Activated naive CD4-positive, alpha-beta T cell treated with anti-CD3 and anti-CD28 coated beads, Interleukin-2, amount 10 ng/mL, durations not matched to agents 7 days and 5 days (primary cell): ENCODE measurements at regions of chr4 and their contacts with region 1.

Region 1: DNA sequence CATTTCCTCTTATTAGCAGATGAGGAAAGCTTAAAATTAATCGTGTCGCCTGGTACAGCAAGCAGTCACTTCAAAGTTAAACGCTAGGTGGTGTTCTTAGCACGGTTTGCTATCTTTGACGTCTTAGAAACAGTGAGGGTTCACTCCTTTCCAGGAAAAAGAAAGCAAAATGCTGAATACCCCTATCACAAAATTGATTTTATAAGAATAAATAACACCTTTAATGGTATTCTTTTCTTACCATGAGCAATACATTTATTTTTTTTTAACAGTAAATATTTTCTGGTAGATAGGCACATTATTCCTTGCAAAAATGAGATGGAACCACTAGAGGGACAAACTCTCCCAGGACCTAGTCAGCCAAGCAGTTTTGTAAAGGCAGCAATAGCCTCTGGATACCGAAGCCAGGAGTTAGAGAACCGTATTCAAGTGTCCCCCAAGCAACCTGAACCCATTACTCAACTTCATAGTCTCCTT is 153.9 kb downstream of the KDR start:
- DNase-seq: peak; percentile 26
- H3K4me3 Mint-ChIP-seq: no peak overlapping the region
- H3K27ac Mint-ChIP-seq: no peak overlapping the region
- H3K4me1 Mint-ChIP-seq: no peaks in the 10 kb centered on the region
- H3K27me3 Mint-ChIP-seq: no peaks in the 10 kb centered on the region

Region 2: DNA sequence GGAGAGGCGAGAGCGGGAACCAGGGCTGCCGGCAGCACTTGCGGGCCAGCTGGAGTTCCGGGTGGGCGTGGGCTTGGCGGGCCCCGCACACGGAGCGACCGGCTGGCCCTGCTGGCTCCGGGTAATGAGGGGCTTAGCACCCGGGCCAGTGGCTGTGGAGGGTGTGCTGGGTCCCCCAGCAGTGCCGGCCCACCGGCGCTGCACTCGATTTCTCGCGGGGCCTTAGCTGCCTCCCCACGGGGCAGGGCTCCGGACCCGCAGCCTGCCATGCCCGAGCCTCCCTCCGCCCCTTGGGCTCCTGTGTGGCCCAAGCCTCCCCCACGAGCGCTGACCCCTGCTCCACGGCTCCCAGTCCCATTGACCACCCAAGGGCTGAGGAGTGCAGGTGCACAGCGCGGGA is 339.0 kb before region 1 on chr4:
- CTCF ChIA-PET with region 1: no interaction called
- DNase-seq: no peak
- H3K4me3 Mint-ChIP-seq: no peak overlapping the region
- H3K27ac Mint-ChIP-seq: no peak overlapping the region
- H3K4me1 Mint-ChIP-seq: peaks cover 3% of the 10 kb centered on the region
- H3K27me3 Mint-ChIP-seq: peaks cover 13% of the 10 kb centered on the region

Region 3: DNA sequence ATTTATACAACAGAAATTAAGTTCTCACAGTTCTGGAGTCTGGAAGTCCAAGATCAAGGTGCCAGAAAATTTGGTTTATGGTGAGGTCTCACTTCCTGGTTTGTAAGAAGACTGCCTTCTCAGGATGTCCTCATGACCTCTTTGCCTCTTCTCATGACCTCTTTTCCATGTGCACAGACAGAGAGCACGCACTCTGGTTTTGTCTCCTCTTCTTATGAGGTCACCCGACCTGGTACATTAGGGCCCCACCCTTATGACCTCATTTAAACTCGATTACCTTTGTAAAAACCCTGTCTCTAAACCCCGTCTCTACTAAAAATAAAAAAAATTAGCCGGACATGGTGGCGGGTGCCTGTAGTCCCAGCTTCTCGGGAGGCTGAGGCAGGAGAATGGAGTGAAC is 157.8 kb before region 1 on chr4:
- CTCF ChIA-PET with region 1: no interaction called
- DNase-seq: no peak
- H3K4me3 Mint-ChIP-seq: no peak overlapping the region
- H3K27ac Mint-ChIP-seq: no peak overlapping the region
- H3K4me1 Mint-ChIP-seq: no peaks in the 10 kb centered on the region
- H3K27me3 Mint-ChIP-seq: no peaks in the 10 kb centered on the region

Region 4: DNA sequence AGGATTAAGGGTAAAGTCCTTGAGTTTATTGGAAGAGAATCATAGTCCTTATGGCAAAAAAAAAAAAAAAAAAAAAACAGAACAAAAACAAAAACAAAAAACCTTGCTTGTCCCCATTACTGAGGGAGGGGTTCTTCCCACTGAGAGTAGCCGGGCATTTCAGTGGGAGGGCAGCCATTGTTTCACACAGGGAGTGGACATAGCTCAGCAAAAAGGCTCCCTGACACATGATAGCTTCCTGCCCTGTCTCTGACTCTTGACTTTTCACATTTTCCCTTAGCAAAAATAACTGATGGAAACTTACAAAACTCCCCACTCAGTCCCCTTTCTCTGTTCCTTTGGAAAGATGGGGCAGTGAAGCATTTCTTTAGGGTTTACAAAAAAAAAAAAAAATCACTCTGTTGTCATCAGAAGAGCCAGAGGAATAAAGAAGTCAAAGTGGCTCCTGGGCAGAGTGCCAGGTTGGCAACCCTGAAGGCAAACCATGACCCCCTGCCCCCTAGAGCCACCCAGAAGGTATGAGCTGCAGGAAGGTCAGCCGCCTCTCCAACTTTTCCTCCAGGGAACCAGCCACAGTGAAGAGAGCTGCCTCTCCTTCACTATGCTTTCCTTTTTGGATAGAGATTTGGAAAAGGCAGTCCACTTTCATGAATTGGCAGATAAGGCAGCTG is 16.7 kb before region 1 on chr4:
- CTCF ChIA-PET with region 1: interaction called, 15 read pairs
- DNase-seq: no peak
- H3K4me3 Mint-ChIP-seq: no peak overlapping the region
- H3K27ac Mint-ChIP-seq: no peak overlapping the region
- H3K4me1 Mint-ChIP-seq: peaks cover 17% of the 10 kb centered on the region
- H3K27me3 Mint-ChIP-seq: no peaks in the 10 kb centered on the region

Region 5: GRCh38 chr4:54961357-54961975 is 10.0 kb before region 1 on chr4:
- CTCF ChIA-PET with region 1: interaction called, 15 read pairs
- DNase-seq: no peak
- H3K4me3 Mint-ChIP-seq: no peak overlapping the region
- H3K27ac Mint-ChIP-seq: no peak overlapping the region
- H3K4me1 Mint-ChIP-seq: peaks cover 21% of the 10 kb centered on the region
- H3K27me3 Mint-ChIP-seq: no peaks in the 10 kb centered on the region

Region 6: DNA sequence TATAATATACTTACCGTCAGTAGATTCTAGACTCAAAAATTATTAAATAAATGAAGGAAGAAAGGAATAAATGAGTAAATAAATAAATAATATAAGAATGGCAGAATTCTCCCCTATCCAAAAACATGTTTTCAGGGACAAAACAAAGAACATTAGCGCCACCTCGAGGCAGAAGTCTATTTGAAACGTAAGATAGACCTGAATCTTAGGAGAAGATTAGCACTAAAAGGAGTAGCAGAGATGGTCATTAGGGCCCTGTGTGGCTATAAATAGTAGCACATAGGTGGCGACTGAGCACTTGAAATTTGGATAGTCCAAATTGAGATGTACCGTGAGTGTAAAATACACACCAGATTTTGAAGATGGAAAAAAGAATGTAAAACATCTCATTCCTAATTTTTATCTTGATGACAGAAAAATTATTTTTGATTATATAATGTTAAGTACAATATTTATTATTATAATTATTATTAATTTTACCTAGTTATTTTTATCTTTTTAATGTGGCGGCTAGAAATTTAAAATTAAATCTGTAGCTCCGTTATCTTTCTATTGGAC is 350.3 kb after region 1 on chr4:
- CTCF ChIA-PET with region 1: interaction called, 33 read pairs
- DNase-seq: peak; percentile 73
- H3K4me3 Mint-ChIP-seq: no peak overlapping the region
- H3K27ac Mint-ChIP-seq: no peak overlapping the region
- H3K4me1 Mint-ChIP-seq: peaks cover 12% of the 10 kb centered on the region
- H3K27me3 Mint-ChIP-seq: peaks cover 4% of the 10 kb centered on the region